ENCODE measurements at regions of chr9 and their contacts with region 1.

Region 1: DNA sequence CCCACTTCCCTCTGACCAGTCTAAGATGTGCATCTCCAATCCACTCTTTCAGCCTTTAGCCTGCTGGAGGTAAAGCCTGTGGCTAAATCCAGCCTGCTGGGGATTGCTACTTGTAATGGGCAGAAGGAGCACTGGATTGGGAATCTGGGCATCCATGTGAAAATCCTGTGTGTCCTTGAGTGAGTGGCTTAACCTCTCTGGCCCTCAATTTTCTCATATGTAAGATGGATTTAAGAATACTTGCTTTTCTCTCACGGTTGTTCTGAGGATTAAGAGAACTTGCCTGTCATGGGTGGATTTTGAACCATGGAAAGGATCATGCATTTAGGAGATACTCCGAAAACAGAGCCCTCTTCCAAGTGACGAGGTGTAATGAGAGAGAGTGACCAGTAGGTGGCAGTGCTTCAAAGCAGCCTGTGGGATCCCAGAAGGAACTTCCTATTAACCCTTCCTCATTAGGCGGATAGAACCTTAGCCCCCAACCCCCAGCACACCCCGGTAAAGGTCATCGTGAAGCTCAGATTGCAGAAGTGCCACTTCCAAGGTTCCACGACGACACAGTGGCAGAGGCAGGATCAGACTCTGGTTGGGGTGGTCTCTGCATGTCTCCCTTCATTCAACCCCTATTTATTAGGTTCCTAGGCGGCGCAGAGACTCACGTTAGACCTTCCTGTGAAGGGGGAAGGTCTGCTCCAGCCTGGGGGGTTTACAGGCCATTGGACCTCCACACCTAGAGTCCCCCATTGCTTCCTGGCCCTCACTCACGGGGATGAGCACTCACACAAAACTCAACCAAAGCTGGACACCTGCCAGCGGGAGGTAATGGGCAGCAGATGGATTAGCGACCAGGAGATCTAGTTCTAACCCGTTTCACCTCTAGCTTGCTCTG is 68.7 kb upstream of the ZNF618 start:
- DNase-seq: peak; percentile 56
- H3K4me3 Mint-ChIP-seq: no peak overlapping the region
- H3K27ac Mint-ChIP-seq: no peak overlapping the region
- H3K4me1 Mint-ChIP-seq: peaks cover 7% of the 10 kb centered on the region
- H3K27me3 Mint-ChIP-seq: peaks cover 4% of the 10 kb centered on the region
- CTCF ChIP-seq: peak; percentile 66

Region 2: GRCh38 chr9:113876151-113876992 is 69.0 kb after region 1 on chr9 and contains the start of gene ZNF618:
- CTCF ChIA-PET with region 1: no interaction called
- intact Hi-C with region 1: loop called (anchors 2 kb)
- DNase-seq: peak; percentile 33
- H3K4me3 Mint-ChIP-seq: peak within 1 kb of the TSS; percentile 85
- H3K27ac Mint-ChIP-seq: peak within 1 kb of the TSS; percentile 96
- H3K4me1 Mint-ChIP-seq: no peaks in the 10 kb centered on the region
- H3K27me3 Mint-ChIP-seq: peaks cover 3% of the 10 kb centered on the region
- CTCF ChIP-seq: no peak
- total RNA-seq, gene ZNF618: 18.0 and 20.3 TPM in 2 replicates

Region 3: GRCh38 chr9:113963017-113963620 is 155.7 kb after region 1 on chr9:
- CTCF ChIA-PET with region 1: no interaction called
- intact Hi-C with region 1: loop called (anchors 10 kb)
- DNase-seq: peak; percentile 24
- H3K4me3 Mint-ChIP-seq: no peak overlapping the region
- H3K27ac Mint-ChIP-seq: no peak overlapping the region
- H3K4me1 Mint-ChIP-seq: peaks cover 20% of the 10 kb centered on the region
- H3K27me3 Mint-ChIP-seq: no peaks in the 10 kb centered on the region
- CTCF ChIP-seq: peak; percentile 26

Region 4: DNA sequence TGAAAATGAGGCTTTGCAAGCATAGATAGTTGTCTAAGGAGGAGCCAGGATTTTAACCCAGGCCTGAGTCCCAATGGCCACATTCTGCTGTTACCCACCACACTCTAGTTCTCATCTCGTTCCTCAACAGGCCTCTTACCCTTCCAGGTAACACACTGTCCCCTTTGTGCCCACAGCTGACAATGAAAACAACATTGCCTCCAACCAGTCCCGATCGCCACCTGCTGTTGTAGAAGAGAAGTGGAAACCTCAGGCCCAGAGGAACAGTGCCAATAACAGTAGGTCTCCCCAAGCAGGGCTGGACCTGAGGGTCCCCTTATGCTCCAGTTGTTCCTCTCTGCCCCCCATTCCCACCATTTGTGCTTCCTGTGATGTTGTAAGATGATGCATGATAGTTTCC is 240.3 kb after region 1 on chr9:
- CTCF ChIA-PET with region 1: interaction called, 3 read pairs
- intact Hi-C with region 1: loop called (anchors 10 kb)
- DNase-seq: peak; percentile 31
- H3K4me3 Mint-ChIP-seq: no peak overlapping the region
- H3K27ac Mint-ChIP-seq: no peak overlapping the region
- H3K4me1 Mint-ChIP-seq: no peaks in the 10 kb centered on the region
- H3K27me3 Mint-ChIP-seq: no peaks in the 10 kb centered on the region
- CTCF ChIP-seq: no peak

Measured in Calu3 (cell line).